ENCODE measurements at regions of chr17 and their contacts with region 1.

Region 1: DNA sequence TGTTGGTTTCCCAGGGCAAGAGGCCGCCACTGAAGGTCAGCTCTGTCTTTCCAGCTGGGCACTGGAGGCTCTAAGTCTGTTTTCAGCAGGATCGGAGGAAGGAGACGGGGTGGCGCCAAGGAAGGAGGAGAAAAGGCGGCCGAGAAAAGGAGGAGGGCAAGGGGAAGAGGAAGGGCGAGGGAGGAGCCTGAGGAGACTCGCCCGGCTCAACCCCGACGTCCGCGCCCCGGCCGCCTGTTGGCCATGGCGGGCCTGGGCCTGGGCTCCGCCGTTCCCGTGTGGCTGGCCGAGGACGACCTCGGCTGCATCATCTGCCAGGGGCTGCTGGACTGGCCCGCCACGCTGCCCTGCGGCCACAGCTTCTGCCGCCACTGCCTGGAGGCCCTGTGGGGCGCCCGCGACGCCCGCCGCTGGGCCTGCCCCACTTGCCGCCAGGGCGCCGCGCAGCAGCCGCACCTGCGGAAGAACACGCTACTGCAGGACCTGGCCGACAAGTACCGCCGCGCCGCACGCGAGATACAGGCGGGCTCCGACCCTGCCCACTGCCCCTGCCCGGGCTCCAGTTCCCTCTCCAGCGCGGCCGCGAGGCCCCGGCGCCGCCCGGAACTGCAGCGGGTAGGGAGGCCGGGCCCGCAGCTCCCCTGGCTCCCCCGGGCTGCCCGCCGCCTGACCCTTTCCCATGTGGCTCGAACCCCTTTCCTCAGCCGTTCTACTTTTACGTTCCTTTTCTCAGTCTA is at the start of gene RNF135:
- DNase-seq: peak; percentile 86
- ATAC-seq: peak; percentile 67
- H3K4me3 ChIP-seq: peak within 1 kb of the TSS; percentile 87 to 94 (median 91)
- H3K4me3 Mint-ChIP-seq: peak within 1 kb of the TSS; percentile 99
- H3K27ac ChIP-seq: peak within 1 kb of the TSS; percentile 90
- H3K27ac Mint-ChIP-seq: peak within 1 kb of the TSS; percentile 94
- H3K4me1 ChIP-seq: peaks cover 31 to 46% of the 10 kb centered on the region in 2 donors
- H3K4me1 Mint-ChIP-seq: peaks cover 46% of the 10 kb centered on the region
- H3K27me3 ChIP-seq: no peaks in the 10 kb centered on the region
- H3K27me3 Mint-ChIP-seq: no peaks in the 10 kb centered on the region
- CTCF ChIP-seq: peak; percentile 43
- total RNA-seq, gene RNF135: 22.3 and 23.4 TPM in 2 replicates

Region 2: DNA sequence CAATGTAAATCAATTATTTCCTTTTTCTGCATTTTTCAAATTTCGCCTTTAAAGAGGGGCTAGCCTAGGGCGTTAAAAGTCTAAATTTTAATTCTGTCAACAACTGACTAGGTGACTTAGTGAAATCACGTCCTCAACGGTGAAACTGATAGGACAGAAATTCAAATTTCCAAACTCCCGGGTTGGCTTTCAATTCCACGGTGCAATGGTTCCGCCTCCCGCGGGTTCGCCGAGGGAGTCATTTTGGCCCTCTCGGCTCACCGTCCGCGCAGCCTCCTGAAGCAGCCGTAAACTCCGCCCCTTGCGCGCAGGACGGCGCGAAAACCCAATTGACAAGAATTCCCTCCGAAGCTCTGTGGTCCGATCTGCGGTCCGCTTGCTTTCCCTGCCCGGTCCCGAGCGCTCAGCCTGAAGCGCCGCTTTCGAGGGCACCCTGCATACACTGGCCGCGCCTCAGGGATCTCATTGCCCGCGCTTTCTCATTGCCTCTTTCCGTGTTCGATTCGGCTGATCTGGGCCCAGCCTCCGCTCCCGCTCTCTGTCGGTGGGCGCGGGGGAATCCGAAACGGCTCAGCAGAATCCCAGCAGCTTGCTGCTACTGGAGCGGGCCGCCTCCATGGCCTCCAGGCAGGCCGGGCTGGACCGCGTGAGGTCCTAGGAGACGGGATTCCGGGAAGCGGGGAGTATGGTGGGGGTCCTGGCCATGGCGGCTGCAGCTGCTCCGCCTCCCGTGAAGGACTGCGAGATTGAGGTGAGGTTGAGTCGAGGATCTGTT is 139.1 kb before region 1 on chr17 and contains the start of gene ATAD5:
- CTCF ChIA-PET with region 1: no interaction called
- POLR2A ChIA-PET with region 1: no interaction called
- intact Hi-C with region 1: loop called (anchors 2 kb)
- DNase-seq: peak; percentile 91
- ATAC-seq: peak; percentile 100
- H3K4me3 ChIP-seq: peak within 1 kb of the TSS; percentile 73 to 100 (median 78)
- H3K4me3 Mint-ChIP-seq: peak within 1 kb of the TSS; percentile 96
- H3K27ac ChIP-seq: peak within 1 kb of the TSS in 1 of 2 donors; percentile 67
- H3K27ac Mint-ChIP-seq: peak within 1 kb of the TSS; percentile 96
- H3K4me1 ChIP-seq: peaks cover 14% of the 10 kb centered on the region in 2 donors
- H3K4me1 Mint-ChIP-seq: peaks cover 23% of the 10 kb centered on the region
- H3K27me3 ChIP-seq: no peaks in the 10 kb centered on the region
- H3K27me3 Mint-ChIP-seq: no peaks in the 10 kb centered on the region
- CTCF ChIP-seq: no peak
- total RNA-seq, gene ATAD5: 7.3 and 7.4 TPM in 2 replicates

Region 3: DNA sequence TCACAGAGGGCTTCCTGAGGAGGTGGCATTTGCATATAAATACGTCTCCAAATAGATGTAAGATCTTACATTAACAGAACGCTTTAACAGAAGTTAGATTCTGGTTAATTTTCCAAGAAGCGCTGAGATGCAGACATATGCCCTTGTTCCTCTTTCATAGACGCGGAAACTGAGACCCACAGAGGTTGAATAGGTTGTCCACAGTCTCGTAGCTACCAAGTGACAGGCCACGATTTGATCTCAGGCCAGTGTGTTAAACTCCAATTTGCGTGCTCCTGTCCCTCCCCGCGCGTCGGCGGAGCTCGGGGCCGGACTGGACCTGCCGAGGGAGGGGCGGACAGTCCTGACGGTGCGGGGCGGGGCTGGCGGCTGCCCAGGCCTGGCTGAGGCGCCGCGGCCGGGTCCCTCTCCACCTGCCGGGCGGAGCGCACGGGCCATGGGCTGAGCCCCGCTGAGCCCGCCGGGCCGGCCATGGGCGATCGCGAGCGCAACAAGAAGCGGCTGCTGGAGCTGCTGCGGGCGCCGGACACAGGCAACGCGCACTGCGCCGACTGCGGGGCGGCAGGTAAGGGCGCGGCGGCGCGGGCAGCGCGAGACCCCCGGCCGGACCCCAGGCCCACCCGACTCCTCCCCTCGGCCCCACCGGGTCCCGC is 49.3 kb before region 1 on chr17 and contains the start of gene ADAP2:
- CTCF ChIA-PET with region 1: interaction called, 9 read pairs
- POLR2A ChIA-PET with region 1: interaction called, 9 read pairs
- intact Hi-C with region 1: loop called (anchors 1 kb)
- DNase-seq: peak; percentile 70
- ATAC-seq: peak; percentile 72
- H3K4me3 ChIP-seq: peak within 1 kb of the TSS; percentile 61 to 96 (median 72)
- H3K4me3 Mint-ChIP-seq: peak within 1 kb of the TSS; percentile 99
- H3K27ac ChIP-seq: peak within 1 kb of the TSS in 1 of 2 donors; percentile 41
- H3K27ac Mint-ChIP-seq: peak within 1 kb of the TSS; percentile 95
- H3K4me1 ChIP-seq: peaks cover 11 to 17% of the 10 kb centered on the region in 2 donors
- H3K4me1 Mint-ChIP-seq: peaks cover 16% of the 10 kb centered on the region
- H3K27me3 ChIP-seq: peaks cover 0 to 6% (median 0%) of the 10 kb centered on the region in 4 experiments
- H3K27me3 Mint-ChIP-seq: no peaks in the 10 kb centered on the region
- CTCF ChIP-seq: no peak
- total RNA-seq, gene ADAP2: 11.6 and 14.6 TPM in 2 replicates

Region 4: GRCh38 chr17:30954032-30954830 is 16.8 kb before region 1 on chr17:
- CTCF ChIA-PET with region 1: interaction called, 45 read pairs
- POLR2A ChIA-PET with region 1: interaction called, 9 read pairs
- intact Hi-C with region 1: loop called (anchors 1 kb)
- DNase-seq: peak; percentile 33
- ATAC-seq: no peak
- H3K4me3 ChIP-seq: no peak overlapping the region
- H3K4me3 Mint-ChIP-seq: peak overlapping the region; percentile 37
- H3K27ac ChIP-seq: peak overlapping the region; percentile 52 to 82
- H3K27ac Mint-ChIP-seq: peak overlapping the region; percentile 91
- H3K4me1 ChIP-seq: peaks cover 84 to 92% of the 10 kb centered on the region in 2 donors
- H3K4me1 Mint-ChIP-seq: peaks cover 75% of the 10 kb centered on the region
- H3K27me3 ChIP-seq: no peaks in the 10 kb centered on the region
- H3K27me3 Mint-ChIP-seq: no peaks in the 10 kb centered on the region
- CTCF ChIP-seq: no peak

Region 5: DNA sequence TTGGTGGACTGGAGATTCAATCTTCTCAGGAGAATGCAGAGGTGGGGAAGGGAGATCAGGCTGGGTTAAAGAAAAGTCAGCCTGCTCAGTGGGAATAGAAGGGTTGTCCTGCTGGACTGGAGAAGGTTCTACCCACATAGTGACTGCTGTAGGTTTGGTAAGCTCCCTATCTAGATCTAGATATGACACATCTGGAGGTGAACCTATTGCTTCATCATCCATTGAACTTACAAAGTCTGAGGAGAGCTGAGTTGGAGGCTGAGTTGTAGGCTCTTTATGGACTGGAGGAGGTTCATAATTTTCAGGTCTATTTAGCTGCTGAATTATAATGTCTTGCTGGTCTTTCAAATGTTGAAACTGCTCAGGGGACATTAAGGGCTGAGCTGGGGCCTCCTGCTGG is 77.8 kb after region 1 on chr17:
- CTCF ChIA-PET with region 1: no interaction called
- POLR2A ChIA-PET with region 1: no interaction called
- intact Hi-C with region 1: no loop called
- DNase-seq: no peak
- ATAC-seq: no peak
- H3K4me3 ChIP-seq: no peak overlapping the region
- H3K4me3 Mint-ChIP-seq: no peak overlapping the region
- H3K27ac ChIP-seq: no peak overlapping the region
- H3K27ac Mint-ChIP-seq: no peak overlapping the region
- H3K4me1 ChIP-seq: no peaks in the 10 kb centered on the region
- H3K4me1 Mint-ChIP-seq: peaks cover 2% of the 10 kb centered on the region
- H3K27me3 ChIP-seq: no peaks in the 10 kb centered on the region
- H3K27me3 Mint-ChIP-seq: no peaks in the 10 kb centered on the region
- CTCF ChIP-seq: no peak

Region 6: DNA sequence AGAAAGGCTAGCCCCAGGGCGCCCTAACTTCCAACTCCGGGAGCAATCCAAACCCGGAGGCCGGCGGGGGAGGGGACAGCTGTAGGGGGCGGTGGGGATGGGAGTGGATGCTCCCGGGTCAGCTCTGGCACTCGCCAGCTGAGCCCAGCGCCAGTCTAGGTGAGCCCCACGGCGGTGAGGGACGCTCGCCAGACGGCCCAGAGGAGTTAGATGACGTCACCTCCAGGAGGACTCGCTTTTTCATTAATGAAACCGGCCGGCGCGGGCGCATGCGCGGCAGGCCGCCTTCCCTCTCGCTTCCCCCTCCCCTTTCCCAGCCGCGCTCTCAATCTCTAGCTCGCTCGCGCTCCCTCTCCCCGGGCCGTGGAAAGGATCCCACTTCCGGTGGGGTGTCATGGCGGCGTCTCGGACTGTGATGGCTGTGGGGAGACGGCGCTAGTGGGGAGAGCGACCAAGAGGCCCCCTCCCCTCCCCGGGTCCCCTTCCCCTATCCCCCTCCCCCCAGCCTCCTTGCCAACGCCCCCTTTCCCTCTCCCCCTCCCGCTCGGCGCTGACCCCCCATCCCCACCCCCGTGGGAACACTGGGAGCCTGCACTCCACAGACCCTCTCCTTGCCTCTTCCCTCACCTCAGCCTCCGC is 123.7 kb after region 1 on chr17 and contains the start of gene NF1:
- CTCF ChIA-PET with region 1: no interaction called
- POLR2A ChIA-PET with region 1: interaction called, 5 read pairs
- intact Hi-C with region 1: loop called (anchors 10 kb)
- DNase-seq: peak; percentile 93
- ATAC-seq: peak; percentile 79
- H3K4me3 ChIP-seq: peak within 1 kb of the TSS; percentile 67 to 90 (median 82)
- H3K4me3 Mint-ChIP-seq: peak within 1 kb of the TSS; percentile 97
- H3K27ac ChIP-seq: peak within 1 kb of the TSS; percentile 75 to 90
- H3K27ac Mint-ChIP-seq: peak within 1 kb of the TSS; percentile 93
- H3K4me1 ChIP-seq: peaks cover 5 to 14% of the 10 kb centered on the region in 2 donors
- H3K4me1 Mint-ChIP-seq: peaks cover 11% of the 10 kb centered on the region
- H3K27me3 ChIP-seq: no peaks in the 10 kb centered on the region
- H3K27me3 Mint-ChIP-seq: no peaks in the 10 kb centered on the region
- CTCF ChIP-seq: no peak
- total RNA-seq, gene NF1: 27.7 and 31.9 TPM in 2 replicates

Region 7: GRCh38 chr17:31321481-31321880 is 350.5 kb after region 1 on chr17 and contains the start of gene EVI2A:
- CTCF ChIA-PET with region 1: no interaction called
- POLR2A ChIA-PET with region 1: no interaction called
- intact Hi-C with region 1: no loop called
- DNase-seq: peak; percentile 81
- ATAC-seq: peak; percentile 71
- H3K4me3 ChIP-seq: peak within 1 kb of the TSS; percentile 40 to 98 (median 69)
- H3K4me3 Mint-ChIP-seq: peak within 1 kb of the TSS; percentile 87
- H3K27ac ChIP-seq: peak within 1 kb of the TSS; percentile 40 to 91
- H3K27ac Mint-ChIP-seq: peak within 1 kb of the TSS; percentile 69
- H3K4me1 ChIP-seq: peaks cover 19 to 32% of the 10 kb centered on the region in 2 donors
- H3K4me1 Mint-ChIP-seq: peaks cover 37% of the 10 kb centered on the region
- H3K27me3 ChIP-seq: no peaks in the 10 kb centered on the region
- H3K27me3 Mint-ChIP-seq: no peaks in the 10 kb centered on the region
- CTCF ChIP-seq: no peak
- total RNA-seq, gene EVI2A: 47.3 and 49.3 TPM in 2 replicates

Measured in B cell (primary cell).